ENCODE measurements at regions of chr3 and their contacts with region 1.

Region 1: DNA sequence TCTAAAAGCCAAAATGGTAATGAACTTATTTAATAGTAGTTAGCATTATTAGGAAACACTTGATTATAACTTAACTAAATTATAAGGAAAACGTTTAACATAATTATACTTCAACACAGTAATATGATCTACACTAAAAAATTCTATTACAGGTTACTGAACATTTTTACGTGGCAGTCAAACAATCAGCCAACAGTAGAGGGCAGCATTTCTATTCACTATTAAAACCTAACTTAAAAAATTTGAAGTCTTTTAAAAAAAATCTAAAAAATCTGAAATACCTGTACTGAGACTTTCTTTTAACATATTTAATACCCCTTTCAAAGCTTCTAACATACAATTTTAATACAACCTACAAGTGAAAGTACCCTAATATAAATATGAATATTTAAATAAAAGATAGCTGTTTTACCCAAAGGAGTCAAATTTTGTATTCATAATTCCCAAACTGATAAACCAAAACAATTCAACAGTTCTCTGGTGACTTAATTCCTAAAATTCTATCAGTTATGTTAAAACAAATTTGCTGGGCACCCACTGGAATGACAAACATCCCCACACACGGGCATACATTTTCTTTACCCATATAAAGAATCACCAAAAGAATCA is 41.5 kb downstream of the DLG1 start:
- DNase-seq: peak in 1 of 10 donors; percentile 24

Region 2: GRCh38 chr3:197456261-197457091 is 199.5 kb after region 1 on chr3:
- intact Hi-C with region 1: loop called (anchors 10 kb)
- DNase-seq: peak; percentile 74 to 98 (median 84)

Region 3: DNA sequence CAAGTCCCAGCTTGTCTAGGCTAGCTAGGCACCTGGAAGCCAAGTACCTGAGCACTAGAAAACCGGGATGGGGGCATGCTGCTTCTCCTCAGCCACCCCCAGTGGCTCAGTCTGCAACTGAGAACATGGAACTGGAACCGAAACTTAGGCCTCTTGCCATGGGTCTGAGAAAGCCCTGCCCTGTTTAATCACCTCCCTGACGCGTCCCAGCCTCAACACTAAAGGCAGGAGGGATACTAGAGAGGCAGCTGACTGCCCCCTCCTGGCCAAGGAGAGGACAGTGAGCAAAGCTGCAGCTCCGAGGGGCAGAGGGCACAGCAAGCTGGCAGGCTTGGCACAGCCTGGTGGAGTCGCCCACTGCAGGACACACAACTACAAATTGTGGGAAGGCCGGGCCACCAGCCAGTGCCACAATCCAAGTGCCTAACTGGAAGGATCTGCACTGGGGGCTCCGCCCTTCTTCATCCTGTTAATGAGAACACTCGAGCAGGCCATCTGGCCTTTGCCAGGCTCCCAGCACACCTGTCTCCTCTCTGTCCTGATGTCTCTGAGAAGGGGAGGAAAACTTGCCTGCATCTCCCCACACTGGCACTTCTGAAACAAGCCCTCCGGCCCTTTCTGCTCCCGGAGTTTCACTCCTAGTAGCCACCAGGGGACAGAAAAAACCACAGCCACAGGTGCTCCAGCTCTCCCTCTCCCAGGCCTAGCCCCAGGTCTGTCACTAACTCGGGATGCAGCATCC is 245.1 kb after region 1 on chr3:
- intact Hi-C with region 1: loop called (anchors 2 kb)
- DNase-seq: peak in 7 of 10 donors; percentile 48 to 92 (median 65)

Region 4: DNA sequence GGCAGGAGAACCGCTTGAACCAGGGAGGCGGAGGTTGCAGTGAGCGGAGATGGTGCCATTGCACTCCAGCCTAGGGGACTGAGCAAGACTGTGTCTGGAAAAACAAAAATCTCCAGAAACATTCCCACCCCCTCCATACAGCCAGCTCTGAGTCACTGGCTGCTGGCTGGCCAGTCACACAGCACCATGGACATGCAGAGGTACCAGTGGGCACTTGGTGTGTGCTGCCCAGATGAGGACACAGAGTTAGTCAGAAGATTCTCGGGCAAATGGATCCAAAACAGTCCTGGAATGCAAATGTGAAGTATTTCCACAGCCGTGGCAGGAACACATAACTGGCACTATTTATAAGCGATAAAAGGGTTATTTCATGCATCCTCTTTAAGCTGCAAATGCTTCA is 254.2 kb after region 1 on chr3:
- intact Hi-C with region 1: loop called (anchors 1 kb)
- DNase-seq: peak in 7 of 10 donors; percentile 40 to 93 (median 66)

Measured in posterior cingulate gyrus (tissue), 11 donors.